ENCODE measurements at regions of chr6 and their contacts with region 1.

Region 1: GRCh38 chr6:109526905-109527628 is 44.0 kb upstream of the ZBTB24 start:
- DNase-seq: peak; percentile 79
- H3K4me3 ChIP-seq: no peak overlapping the region
- H3K27ac ChIP-seq: no peak overlapping the region
- H3K4me1 ChIP-seq: peaks cover 11% of the 10 kb centered on the region
- H3K27me3 ChIP-seq: no peaks in the 10 kb centered on the region

Region 2: DNA sequence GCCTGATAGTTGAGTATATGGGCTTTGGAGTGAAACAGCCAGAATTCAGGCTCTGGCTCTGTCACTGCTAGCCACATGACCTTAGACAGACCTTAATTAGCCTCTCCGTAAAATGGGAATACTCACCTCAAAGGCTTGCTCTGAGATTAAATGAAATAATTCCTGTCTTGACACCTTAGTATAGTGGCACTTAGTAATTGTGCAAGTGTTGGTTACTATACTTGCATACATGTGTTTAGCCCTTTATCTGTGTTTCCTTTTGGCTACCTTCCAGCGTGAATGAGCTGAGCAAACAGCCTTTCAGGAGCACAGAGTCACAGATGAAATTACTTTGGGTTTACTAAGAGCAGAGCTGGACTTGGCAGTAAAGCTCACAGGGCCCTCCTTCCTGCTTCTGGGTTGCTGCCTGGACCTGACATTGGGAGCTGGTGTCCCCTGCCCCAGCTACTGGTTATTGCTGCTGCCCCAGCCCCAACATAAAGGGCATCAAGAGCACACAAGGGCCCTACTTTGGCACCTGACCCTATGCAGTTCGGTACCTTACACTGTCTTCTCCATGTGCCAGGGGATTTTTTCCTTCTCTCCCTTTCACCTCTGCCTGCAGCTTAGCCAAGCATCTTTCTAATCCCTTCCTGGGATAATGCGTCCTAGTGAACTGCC is 177.5 kb before region 1 on chr6:
- in situ Hi-C with region 1: no loop called
- DNase-seq: peak; percentile 86
- H3K4me3 ChIP-seq: no peak overlapping the region
- H3K27ac ChIP-seq: no peak overlapping the region
- H3K4me1 ChIP-seq: peaks cover 25% of the 10 kb centered on the region
- H3K27me3 ChIP-seq: no peaks in the 10 kb centered on the region

Region 3: DNA sequence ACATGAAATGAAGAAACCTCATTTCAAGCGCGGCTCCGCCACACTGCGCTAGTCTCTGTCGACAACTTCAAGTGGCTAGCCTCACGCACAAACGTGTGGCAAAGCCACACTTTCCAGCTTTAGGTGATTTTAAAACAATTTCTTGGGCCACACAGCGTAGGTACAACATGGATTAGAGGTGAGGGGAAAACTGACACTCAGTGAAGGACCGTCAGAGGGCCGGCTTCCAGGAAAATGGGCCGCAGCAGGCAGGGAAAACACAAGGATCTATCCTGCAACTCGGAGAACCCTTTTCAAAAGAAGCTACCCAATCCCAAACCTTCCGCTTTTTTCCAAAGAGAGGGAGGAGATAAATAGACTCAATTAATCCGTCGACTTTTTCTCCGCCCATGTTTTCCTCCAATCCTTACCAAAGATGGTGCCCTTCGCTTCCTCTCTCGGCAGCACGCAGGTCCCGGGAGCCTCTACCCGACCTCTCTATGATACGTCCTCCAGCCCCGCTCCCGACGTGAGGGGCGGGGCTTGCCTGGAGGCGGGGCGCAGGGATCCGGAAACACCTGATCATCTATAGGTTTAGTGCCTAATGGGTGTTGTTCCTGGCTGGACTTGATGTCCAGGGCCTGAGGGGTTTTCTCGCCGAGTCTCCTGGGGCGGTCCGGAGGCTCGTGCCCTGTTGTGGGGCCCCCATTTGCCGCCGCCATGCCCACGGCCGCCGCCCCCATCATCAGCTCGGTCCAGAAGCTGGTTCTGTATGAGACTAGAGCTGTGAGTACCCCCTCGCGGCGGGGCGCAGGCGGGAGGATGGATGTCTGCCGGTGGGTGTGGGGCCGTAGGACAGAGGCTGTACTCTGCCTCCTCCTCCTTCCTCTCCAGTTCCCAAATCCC is 163.9 kb after region 1 on chr6 and contains the starts of genes AK9 and FIG4:
- in situ Hi-C with region 1: loop called (anchors 10 kb)
- DNase-seq: peak; percentile 97
- H3K4me3 ChIP-seq: peak within 1 kb of the TSS; percentile 97
- H3K27ac ChIP-seq: peak within 1 kb of the TSS; percentile 67
- H3K4me1 ChIP-seq: peaks cover 23% of the 10 kb centered on the region
- H3K27me3 ChIP-seq: no peaks in the 10 kb centered on the region
- total RNA-seq, gene AK9: 2.0 and 7.2 TPM in 2 replicates
- total RNA-seq, gene FIG4: 7.2 and 11.5 TPM in 2 replicates

Region 4: DNA sequence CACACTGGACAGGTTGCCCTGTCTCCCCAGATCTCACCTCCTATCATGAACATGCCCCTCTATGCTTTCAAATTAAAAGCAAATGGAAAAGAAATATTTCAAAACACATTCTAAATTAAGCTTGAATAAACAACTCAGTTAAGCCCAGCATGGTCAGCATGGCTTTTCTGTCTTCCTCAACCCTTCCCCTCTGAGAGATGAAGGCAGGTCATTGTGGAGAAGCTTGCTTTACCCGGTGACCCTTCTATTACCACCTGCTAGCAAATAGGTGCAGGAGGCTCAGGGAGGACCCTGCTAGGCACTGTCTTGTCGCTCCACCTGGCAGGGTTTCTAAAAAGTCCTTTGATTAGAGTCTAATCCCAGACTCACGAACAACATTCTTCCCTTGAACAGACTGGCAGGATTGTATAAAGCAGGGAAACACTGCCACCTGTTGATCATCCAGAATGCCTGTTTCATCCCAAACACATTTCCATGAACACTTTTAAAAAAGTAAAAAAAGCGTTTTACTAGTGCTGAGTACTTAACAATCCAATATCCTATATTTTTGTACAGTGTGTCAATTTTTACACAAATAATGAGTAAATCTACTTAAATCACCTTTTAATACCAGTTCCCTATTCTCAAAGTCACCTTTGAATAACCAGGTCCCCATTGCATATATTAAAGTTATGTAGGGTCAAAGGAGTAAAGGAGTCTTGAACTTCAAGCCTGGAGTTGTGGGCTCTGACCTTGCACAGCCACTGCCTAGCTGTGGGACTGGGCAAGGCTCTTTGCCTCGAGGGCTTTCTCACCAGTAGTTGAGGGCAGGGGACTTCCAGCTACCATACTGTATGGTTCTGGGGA is 526.6 kb after region 1 on chr6:
- in situ Hi-C with region 1: loop called (anchors 10 kb)
- DNase-seq: peak; percentile 75
- H3K4me3 ChIP-seq: no peak overlapping the region
- H3K27ac ChIP-seq: no peak overlapping the region
- H3K4me1 ChIP-seq: no peaks in the 10 kb centered on the region
- H3K27me3 ChIP-seq: peaks cover 12% of the 10 kb centered on the region

Region 5: DNA sequence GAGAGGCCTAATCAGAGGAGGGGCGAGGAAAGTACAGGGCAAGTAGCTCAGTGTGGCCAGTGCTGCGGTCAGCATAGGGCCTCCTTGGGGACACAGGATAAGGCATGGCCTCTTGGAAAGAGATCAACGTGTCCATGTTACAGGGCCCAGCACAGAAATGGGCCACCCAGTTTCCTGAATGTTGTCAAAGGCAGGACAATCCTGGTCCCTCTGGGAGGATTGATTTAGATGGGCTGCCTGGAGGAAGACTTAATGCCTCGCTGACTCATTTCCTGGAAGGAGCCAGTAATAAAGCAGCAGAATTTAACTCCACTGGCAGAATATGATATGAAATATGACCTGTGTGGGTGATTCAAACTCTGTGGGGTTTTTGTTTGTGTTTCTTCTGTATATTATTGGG is 871.7 kb after region 1 on chr6:
- in situ Hi-C with region 1: loop called (anchors 10 kb)
- DNase-seq: peak; percentile 52
- H3K4me3 ChIP-seq: no peak overlapping the region
- H3K27ac ChIP-seq: no peak overlapping the region
- H3K4me1 ChIP-seq: no peaks in the 10 kb centered on the region
- H3K27me3 ChIP-seq: no peaks in the 10 kb centered on the region

Measured in GM23248 (cell line).